Calu3 (cell line): ENCODE measurements at regions of chr4 and their contacts with region 1.

Region 1: GRCh38 chr4:182938205-182938645 is 21.0 kb upstream of the DCTD start:
- DNase-seq: peak; percentile 81
- H3K4me3 Mint-ChIP-seq: no peak overlapping the region
- H3K27ac Mint-ChIP-seq: no peak overlapping the region
- H3K4me1 Mint-ChIP-seq: no peaks in the 10 kb centered on the region
- H3K27me3 Mint-ChIP-seq: peaks cover 15% of the 10 kb centered on the region
- CTCF ChIP-seq: peak; percentile 68

Region 2: GRCh38 chr4:182562350-182562749 is 375.9 kb before region 1 on chr4:
- CTCF ChIA-PET with region 1: no interaction called
- intact Hi-C with region 1: no loop called
- DNase-seq: no peak
- H3K4me3 Mint-ChIP-seq: no peak overlapping the region
- H3K27ac Mint-ChIP-seq: no peak overlapping the region
- H3K4me1 Mint-ChIP-seq: peaks cover 9% of the 10 kb centered on the region
- H3K27me3 Mint-ChIP-seq: no peaks in the 10 kb centered on the region
- CTCF ChIP-seq: no peak

Region 3: DNA sequence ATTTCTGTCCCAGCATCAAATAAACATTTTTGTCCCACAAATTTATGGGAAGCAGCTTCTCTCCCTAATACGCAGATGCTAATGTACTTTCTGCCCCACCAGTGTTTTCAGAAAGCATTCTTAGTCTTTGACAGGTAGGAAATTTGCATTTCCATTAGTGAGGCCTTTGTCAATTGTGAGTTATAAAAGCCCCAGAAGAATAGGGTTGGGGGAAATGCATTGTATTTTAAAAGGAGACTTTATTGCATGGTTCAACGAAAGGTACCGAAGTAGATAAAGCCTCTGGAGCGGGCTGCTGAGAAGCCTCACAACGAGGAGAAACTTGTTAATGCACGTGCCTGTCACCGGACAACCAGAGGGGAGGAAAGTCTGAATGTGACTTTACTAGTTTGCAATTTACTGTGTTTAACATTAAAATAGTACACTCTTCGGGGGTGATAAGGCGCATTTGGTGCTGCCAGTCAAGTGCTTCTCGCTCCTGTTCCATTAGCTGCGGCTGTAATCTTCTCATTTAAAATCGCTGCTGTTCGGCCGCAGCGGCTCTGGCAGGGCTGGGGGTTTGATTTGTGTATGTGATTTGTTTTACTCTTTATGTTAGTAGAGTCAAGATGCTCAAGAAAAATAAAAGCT is 84.4 kb before region 1 on chr4:
- CTCF ChIA-PET with region 1: no interaction called
- intact Hi-C with region 1: no loop called
- DNase-seq: no peak
- H3K4me3 Mint-ChIP-seq: no peak overlapping the region
- H3K27ac Mint-ChIP-seq: no peak overlapping the region
- H3K4me1 Mint-ChIP-seq: no peaks in the 10 kb centered on the region
- H3K27me3 Mint-ChIP-seq: no peaks in the 10 kb centered on the region
- CTCF ChIP-seq: no peak

Region 4: DNA sequence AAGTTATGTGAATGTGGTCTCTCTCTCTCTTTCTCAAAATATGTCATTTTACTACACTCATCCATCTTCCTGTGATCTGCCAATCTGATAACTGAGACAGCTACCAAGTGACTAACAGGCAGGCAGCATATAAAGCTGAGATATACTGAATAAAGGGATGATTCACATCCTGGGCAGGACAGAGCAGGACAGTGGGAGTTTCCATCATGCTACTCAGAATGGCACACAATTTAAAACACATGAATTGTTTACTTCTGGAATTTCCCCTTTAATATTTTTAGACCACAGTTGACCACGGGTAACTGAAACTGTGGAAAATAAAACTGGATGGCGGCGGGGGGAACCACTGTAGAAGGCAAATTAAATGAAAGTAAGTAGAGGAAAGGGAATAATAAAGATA is 37.6 kb after region 1 on chr4:
- CTCF ChIA-PET with region 1: no interaction called
- intact Hi-C with region 1: no loop called
- DNase-seq: no peak
- H3K4me3 Mint-ChIP-seq: no peak overlapping the region
- H3K27ac Mint-ChIP-seq: peak overlapping the region; percentile 41
- H3K4me1 Mint-ChIP-seq: peaks cover 11% of the 10 kb centered on the region
- H3K27me3 Mint-ChIP-seq: no peaks in the 10 kb centered on the region
- CTCF ChIP-seq: no peak

Region 5: GRCh38 chr4:183074296-183074990 is 136.2 kb after region 1 on chr4:
- CTCF ChIA-PET with region 1: interaction called, 7 read pairs
- intact Hi-C with region 1: loop called (anchors 1 kb)
- DNase-seq: no peak
- H3K4me3 Mint-ChIP-seq: no peak overlapping the region
- H3K27ac Mint-ChIP-seq: no peak overlapping the region
- H3K4me1 Mint-ChIP-seq: peaks cover 19% of the 10 kb centered on the region
- H3K27me3 Mint-ChIP-seq: no peaks in the 10 kb centered on the region
- CTCF ChIP-seq: no peak

Region 6: DNA sequence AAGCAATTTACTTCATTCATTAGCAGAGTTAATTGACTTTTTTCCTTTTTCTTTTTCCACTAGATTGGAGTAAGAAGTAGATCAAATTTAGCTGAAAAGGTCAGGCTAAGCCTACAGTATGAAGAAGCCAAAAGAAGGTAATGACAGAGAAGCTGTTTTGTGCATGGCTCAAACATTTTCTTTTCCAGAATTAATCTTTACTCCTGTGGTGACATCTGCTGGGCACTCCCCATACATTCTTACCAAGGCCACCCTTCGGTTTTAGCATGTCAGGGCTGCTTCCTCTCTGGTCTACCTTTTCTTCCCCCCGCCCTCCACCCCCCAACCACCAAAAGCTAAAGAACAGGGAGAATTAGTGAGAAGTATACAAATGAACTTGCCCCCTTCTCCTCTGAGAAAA is 311.6 kb after region 1 on chr4:
- CTCF ChIA-PET with region 1: interaction called, 13 read pairs
- intact Hi-C with region 1: no loop called
- DNase-seq: peak; percentile 43
- H3K4me3 Mint-ChIP-seq: no peak overlapping the region
- H3K27ac Mint-ChIP-seq: no peak overlapping the region
- H3K4me1 Mint-ChIP-seq: peaks cover 28% of the 10 kb centered on the region
- H3K27me3 Mint-ChIP-seq: no peaks in the 10 kb centered on the region
- CTCF ChIP-seq: no peak

Region 7: GRCh38 chr4:183261953-183262775 is 323.9 kb after region 1 on chr4:
- CTCF ChIA-PET with region 1: interaction called, 18 read pairs
- intact Hi-C with region 1: loop called (anchors 1 kb)
- DNase-seq: peak; percentile 79
- H3K4me3 Mint-ChIP-seq: no peak overlapping the region
- H3K27ac Mint-ChIP-seq: peak overlapping the region; percentile 23
- H3K4me1 Mint-ChIP-seq: peaks cover 23% of the 10 kb centered on the region
- H3K27me3 Mint-ChIP-seq: no peaks in the 10 kb centered on the region
- CTCF ChIP-seq: peak; percentile 60